ENCODE measurements at regions of chr4 and their contacts with region 1.

Region 1: GRCh38 chr4:124913237-124913636 is 200.7 kb upstream of the ANKRD50 start:
- DNase-seq: no peak
- H3K4me3 ChIP-seq: no peak overlapping the region
- H3K27ac ChIP-seq: no peak overlapping the region
- H3K4me1 ChIP-seq: no peaks in the 10 kb centered on the region
- H3K27me3 ChIP-seq: no peaks in the 10 kb centered on the region
- CTCF ChIP-seq: no peak
- EP300 ChIP-seq: no peak
- POLR2A ChIP-seq: no peak

Region 2: DNA sequence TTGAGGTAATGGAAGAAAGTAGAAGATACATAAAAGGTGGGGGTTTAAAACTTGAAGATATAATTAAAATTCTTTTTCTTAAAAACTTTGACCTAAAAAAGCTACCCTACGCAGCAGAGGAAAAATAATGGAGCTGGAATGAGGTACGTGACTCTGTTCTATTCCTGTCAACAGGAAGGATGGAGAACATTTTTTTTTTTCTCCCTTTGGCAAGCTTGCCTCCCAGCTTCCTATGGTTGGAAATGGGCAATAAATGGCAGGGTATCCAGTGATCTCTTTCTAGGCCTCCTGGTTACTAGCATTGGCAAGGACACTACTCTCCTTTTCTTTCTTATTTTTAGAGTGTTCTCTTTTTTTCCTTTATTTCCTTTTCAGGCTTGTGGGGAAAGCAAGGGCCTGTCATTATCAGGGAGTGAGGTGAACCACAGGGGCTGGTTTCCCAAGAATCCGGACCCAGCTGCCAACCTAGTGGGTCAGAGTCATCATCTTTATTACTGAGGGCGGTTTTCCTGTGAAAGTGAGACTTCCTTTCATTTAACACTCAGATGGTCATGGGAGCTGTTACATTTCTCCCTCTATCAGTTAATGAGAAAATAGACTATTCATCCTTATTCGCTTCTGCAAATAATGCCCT is 1292.0 kb before region 1 on chr4:
- in situ Hi-C with region 1: no loop called
- intact Hi-C with region 1: loop called (anchors 5 kb)
- DNase-seq: no peak
- H3K4me3 ChIP-seq: no peak overlapping the region
- H3K27ac ChIP-seq: peak overlapping the region in 2 of 4 donors; percentile 32 to 39
- H3K4me1 ChIP-seq: peaks cover 0 to 27% (median 6%) of the 10 kb centered on the region in 4 donors
- H3K27me3 ChIP-seq: no peaks in the 10 kb centered on the region
- CTCF ChIP-seq: no peak
- EP300 ChIP-seq: no peak
- POLR2A ChIP-seq: no peak

Region 3: DNA sequence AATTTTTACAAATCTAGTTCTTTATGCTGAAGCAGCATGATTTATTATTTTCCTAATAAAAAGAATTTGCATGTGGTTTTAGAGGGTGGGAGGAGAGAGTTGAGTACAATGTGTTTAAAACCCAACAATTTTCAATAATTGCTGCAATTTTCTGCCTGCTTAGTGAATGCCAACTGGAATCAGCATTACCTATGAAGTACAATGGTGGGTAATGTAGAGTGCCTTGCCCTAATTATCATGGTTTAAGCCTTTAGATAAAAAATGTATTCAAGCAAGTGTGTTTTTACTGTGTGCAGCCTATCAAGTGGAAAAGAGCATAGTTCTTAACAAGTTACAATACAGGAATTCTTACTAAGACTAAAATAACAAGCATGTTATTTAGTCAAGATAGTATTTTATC is 122.8 kb before region 1 on chr4:
- in situ Hi-C with region 1: no loop called
- intact Hi-C with region 1: no loop called
- DNase-seq: no peak
- H3K4me3 ChIP-seq: no peak overlapping the region
- H3K27ac ChIP-seq: no peak overlapping the region
- H3K4me1 ChIP-seq: no peaks in the 10 kb centered on the region
- H3K27me3 ChIP-seq: no peaks in the 10 kb centered on the region
- CTCF ChIP-seq: no peak
- EP300 ChIP-seq: no peak
- POLR2A ChIP-seq: no peak

Region 4: GRCh38 chr4:125849869-125850268 is 936.6 kb after region 1 on chr4:
- in situ Hi-C with region 1: no loop called
- intact Hi-C with region 1: no loop called
- DNase-seq: no peak
- H3K4me3 ChIP-seq: no peak overlapping the region
- H3K27ac ChIP-seq: no peak overlapping the region
- H3K4me1 ChIP-seq: no peaks in the 10 kb centered on the region
- H3K27me3 ChIP-seq: no peaks in the 10 kb centered on the region
- CTCF ChIP-seq: no peak
- EP300 ChIP-seq: no peak
- POLR2A ChIP-seq: no peak